Activated B cell treated with CpG ODN at 0.5 μM for 24 hours (primary cell): ENCODE measurements at regions of chr16 and their contacts with region 1.

Region 1: DNA sequence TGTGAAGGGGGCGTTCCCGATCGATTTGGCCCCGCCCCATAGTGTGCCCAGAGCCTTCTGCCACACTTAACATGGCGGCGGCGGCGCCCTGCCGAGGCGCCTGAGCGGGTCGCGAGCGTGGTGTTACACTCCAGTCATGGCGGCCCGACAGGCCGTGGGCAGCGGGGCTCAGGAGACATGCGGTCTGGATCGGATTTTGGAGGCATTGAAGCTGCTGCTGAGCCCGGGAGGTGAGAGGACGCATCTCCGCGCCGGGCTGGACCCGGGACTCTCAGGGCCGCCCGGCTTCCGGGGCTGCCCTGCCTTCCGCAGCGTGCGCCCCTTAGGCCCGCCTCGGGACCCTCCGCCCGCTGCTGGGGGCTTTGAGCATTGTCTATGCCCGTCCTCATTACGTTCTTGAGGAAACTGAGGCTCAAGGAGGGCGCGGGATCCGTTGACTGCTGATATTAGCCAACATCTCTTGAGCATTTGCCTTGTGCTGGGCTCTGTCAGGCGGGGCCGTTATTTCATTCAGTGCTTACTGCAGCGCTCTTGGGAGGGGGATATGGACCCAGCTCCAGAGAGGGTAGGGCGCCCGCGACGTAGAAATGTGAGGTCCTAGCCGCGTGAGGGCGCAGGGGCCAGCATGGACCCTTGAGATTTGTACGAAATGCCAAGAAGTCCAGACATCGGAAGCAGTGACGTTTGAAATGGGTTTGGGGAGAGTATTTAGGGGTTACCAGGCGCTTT is at the start of gene TANGO6:
- DNase-seq: peak; percentile 89
- ATAC-seq: peak; percentile 92
- H3K4me3 Mint-ChIP-seq: peak within 1 kb of the TSS; percentile 93
- H3K27ac Mint-ChIP-seq: peak within 1 kb of the TSS; percentile 91
- H3K4me1 Mint-ChIP-seq: peaks cover 22% of the 10 kb centered on the region
- H3K27me3 Mint-ChIP-seq: no peaks in the 10 kb centered on the region
- CTCF ChIP-seq: no peak
- total RNA-seq, gene TANGO6: 32.1 and 39.4 TPM in 2 replicates

Region 2: DNA sequence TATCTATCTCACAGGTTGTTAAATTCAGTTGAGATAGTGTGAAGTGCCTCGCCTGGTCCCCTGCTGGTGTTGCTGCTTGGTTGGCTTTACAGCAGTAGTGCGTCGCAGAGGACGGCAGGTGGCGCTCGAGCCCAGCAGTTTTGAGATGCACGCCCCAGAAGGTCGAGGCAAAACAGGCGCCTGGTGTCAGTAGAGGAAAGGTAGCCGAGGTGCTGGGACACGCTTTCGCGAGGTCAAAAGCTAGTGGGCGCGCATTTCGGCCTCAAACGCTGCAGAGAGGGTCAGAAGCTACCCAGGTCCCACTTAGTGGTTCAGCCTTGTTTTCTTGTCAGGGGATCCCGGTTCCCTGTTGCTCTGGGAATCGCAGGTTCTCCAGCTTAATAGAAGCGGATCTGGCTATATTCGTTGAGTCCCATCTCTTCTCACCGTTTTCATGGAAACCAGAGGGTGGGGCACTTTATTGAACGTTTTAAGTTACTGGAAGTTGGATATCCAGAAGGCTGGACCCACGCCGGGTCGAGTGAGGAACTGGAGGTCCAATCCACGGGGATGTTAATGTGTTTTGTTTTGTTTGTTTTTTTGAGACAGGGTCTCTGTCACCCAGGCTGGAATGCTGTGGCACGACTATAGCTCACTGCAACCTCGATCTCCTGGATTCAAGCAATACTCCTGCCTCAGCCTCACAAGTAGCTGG is 314.8 kb before region 1 on chr16:
- CTCF ChIA-PET with region 1: interaction called, 10 read pairs
- POLR2A ChIA-PET with region 1: interaction called, 7 read pairs
- intact Hi-C with region 1: loop called (anchors 1 kb)
- DNase-seq: peak; percentile 81
- ATAC-seq: peak; percentile 82
- H3K4me3 Mint-ChIP-seq: peak overlapping the region; percentile 88
- H3K27ac Mint-ChIP-seq: peak overlapping the region; percentile 63
- H3K4me1 Mint-ChIP-seq: peaks cover 24% of the 10 kb centered on the region
- H3K27me3 Mint-ChIP-seq: no peaks in the 10 kb centered on the region
- CTCF ChIP-seq: no peak

Region 3: GRCh38 chr16:68704232-68704867 is 139.3 kb before region 1 on chr16:
- CTCF ChIA-PET with region 1: no interaction called
- POLR2A ChIA-PET with region 1: interaction called, 3 read pairs
- intact Hi-C with region 1: loop called (anchors 1 kb)
- DNase-seq: peak; percentile 48
- ATAC-seq: peak; percentile 58
- H3K4me3 Mint-ChIP-seq: peak overlapping the region; percentile 36
- H3K27ac Mint-ChIP-seq: no peak overlapping the region
- H3K4me1 Mint-ChIP-seq: peaks cover 5% of the 10 kb centered on the region
- H3K27me3 Mint-ChIP-seq: no peaks in the 10 kb centered on the region
- CTCF ChIP-seq: no peak

Region 4: DNA sequence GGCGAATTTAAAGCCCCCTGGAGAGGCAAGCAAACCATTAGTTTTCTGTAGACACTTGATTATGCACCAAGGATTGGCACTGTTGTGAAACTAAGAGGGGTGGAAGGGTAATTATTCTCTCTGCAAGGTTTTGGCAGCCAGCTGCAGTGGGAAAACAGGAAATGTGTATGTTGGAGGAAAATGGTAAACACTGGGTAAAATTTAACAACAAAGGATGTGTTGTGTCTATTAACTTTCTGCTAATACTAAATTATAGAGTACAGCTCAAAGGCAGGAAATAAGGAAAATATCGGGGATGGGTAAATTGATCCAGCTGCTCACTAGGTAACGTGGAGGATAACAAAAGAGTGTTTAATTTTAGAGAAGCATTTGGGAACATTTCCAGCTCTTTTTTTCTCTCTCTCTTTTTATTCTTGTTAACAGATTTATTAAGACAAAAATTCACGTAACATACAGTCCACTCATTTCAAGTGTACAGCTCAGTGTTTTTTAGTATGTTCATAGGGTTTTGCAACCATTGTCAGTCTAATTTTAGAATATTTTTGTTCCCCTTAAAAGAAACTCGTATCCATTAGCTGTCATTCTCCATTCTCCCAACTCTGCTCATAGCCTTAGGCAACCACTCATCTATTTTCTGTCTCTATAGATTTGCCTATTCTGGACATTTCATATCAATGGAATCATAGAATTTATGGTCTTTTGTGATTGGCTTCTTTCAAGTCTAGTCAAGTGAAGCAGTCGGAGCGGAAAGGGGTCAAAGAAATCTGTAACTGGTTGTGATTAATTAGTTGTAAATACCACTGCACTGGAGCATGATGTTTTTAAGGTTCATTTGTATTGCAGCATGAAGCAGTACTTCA is 41.4 kb after region 1 on chr16:
- CTCF ChIA-PET with region 1: no interaction called
- POLR2A ChIA-PET with region 1: no interaction called
- intact Hi-C with region 1: no loop called
- DNase-seq: no peak
- ATAC-seq: no peak
- H3K4me3 Mint-ChIP-seq: no peak overlapping the region
- H3K27ac Mint-ChIP-seq: no peak overlapping the region
- H3K4me1 Mint-ChIP-seq: no peaks in the 10 kb centered on the region
- H3K27me3 Mint-ChIP-seq: no peaks in the 10 kb centered on the region
- CTCF ChIP-seq: no peak

Region 5: GRCh38 chr16:69132424-69133252 is 289.0 kb after region 1 on chr16 and contains the starts of genes CHTF8 and UTP4:
- CTCF ChIA-PET with region 1: no interaction called
- POLR2A ChIA-PET with region 1: no interaction called
- intact Hi-C with region 1: loop called (anchors 2 kb)
- DNase-seq: peak; percentile 89
- ATAC-seq: peak; percentile 85
- H3K4me3 Mint-ChIP-seq: peak within 1 kb of the TSS; percentile 94
- H3K27ac Mint-ChIP-seq: peak within 1 kb of the TSS; percentile 85
- H3K4me1 Mint-ChIP-seq: peaks cover 47% of the 10 kb centered on the region
- H3K27me3 Mint-ChIP-seq: no peaks in the 10 kb centered on the region
- CTCF ChIP-seq: no peak
- total RNA-seq, gene CHTF8: 134 and 143 TPM in 2 replicates
- total RNA-seq, gene UTP4: 53.5 and 55.3 TPM in 2 replicates

Region 6: DNA sequence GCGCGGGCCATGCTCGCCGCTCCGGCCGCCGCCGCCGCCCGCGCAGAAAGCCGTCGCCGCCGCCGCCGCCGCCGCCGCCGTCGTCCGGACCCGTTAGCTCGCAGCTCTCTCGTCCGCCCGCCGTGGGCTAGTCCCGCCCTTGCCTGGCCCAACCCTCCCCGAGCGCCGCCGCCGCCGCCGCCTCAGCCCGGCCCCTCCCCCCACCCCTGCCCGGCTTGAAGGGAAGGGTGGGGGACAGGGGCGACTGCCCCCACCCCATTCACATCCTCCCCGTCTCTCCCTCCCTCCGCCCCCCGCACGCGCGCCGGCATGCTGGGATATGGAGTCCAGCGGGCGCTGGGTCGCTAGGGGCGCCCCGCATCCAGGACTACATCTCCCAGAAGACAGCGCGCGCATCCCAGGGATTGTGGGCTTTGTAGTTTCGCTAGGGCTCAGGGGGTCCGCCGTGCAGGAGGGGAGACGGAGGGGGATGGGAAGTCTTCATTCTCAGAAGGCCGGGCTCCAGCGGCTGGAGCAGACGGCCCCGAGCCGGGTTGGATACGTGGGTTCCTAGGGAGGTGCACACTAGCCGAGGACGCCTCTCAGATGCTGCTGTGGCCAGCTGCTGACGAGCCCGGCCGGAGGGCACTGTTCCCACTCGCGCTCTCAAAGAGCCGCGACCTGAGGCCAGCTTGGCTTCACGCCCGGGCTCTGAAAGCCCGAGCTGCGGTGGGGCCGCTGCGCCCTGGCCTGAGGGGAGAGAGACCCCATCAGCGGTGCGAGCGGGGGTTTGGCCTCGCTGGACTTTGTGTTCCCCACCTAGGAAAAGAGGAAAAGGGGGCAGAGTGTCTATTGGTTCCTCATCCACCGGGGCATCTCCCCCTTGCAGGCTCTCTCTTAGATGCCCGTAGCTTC is 1595.6 kb after region 1 on chr16 and contains the start of gene ST3GAL2:
- CTCF ChIA-PET with region 1: no interaction called
- POLR2A ChIA-PET with region 1: no interaction called
- intact Hi-C with region 1: loop called (anchors 5 kb)
- DNase-seq: peak; percentile 90
- ATAC-seq: peak; percentile 96
- H3K4me3 Mint-ChIP-seq: peak within 1 kb of the TSS; percentile 96
- H3K27ac Mint-ChIP-seq: peak within 1 kb of the TSS; percentile 86
- H3K4me1 Mint-ChIP-seq: peaks cover 39% of the 10 kb centered on the region
- H3K27me3 Mint-ChIP-seq: no peaks in the 10 kb centered on the region
- CTCF ChIP-seq: no peak
- total RNA-seq, gene ST3GAL2: 51.5 and 57.4 TPM in 2 replicates